ENCODE measurements at regions of chr3 and their contacts with region 1.

Region 1: DNA sequence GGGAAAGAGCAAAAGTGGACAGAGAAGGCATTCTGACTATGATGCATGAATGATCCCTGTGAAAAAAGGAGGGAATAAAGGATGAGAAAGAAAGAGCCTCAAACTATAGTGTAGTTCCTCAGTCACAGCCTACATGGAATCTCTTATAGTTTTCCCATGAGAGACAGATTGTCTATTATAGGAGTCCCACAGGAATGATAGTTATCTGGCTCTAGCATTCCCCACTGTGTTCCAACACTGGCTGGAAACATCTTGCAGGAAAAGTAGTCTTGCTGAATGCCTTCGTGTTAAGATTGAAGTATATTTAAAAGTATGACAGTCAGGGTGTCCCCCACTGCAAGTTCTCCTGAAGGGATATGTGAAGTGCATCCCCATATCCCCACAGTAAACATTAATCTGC is 641.5 kb upstream of the NECTIN3 start:
- DNase-seq: no peak
- ATAC-seq: no peak
- H3K4me3 ChIP-seq: no peak overlapping the region
- H3K4me3 Mint-ChIP-seq: no peak overlapping the region
- H3K27ac ChIP-seq: no peak overlapping the region
- H3K27ac Mint-ChIP-seq: no peak overlapping the region
- H3K4me1 ChIP-seq: no peaks in the 10 kb centered on the region
- H3K4me1 Mint-ChIP-seq: no peaks in the 10 kb centered on the region
- H3K27me3 ChIP-seq: no peaks in the 10 kb centered on the region
- H3K27me3 Mint-ChIP-seq: no peaks in the 10 kb centered on the region
- CTCF ChIP-seq: no peak

Region 2: DNA sequence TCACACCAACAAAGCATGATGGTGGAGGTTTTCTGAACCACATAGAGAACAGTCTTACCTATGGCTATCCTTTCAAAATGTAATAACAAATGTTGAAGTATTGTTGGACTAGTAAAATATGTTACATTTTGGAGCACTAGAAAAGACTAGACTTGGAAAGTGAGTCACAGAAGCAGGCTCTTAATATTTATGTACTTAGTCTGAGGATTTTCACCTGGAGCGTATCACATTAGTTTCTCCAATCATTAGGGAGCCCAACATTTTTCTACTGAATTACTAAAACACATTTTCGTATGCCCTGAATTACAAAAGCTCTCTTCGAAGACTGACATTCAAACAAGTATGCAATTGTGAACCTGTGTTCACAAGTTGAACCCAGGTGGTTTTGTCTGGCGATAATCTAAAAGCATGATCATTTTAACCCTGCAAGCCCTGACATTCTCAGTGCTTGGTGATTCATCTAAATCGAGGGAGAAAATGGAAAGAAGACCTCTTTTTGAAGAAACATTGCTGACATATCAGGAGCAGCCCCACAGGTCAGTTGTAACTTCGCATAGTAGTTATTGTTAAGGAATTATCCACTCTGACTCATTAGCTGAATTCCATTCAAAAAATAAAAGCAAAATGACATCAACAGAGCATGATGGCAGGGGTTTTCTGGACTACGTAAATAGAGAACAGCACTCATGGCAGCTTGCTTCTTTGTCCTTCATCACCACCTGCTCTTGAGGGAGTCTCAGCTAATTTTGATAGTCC is 38.3 kb before region 1 on chr3:
- CTCF ChIA-PET with region 1: no interaction called
- POLR2A ChIA-PET with region 1: no interaction called
- intact Hi-C with region 1: no loop called
- DNase-seq: no peak
- ATAC-seq: no peak
- H3K4me3 ChIP-seq: no peak overlapping the region
- H3K4me3 Mint-ChIP-seq: no peak overlapping the region
- H3K27ac ChIP-seq: no peak overlapping the region
- H3K27ac Mint-ChIP-seq: no peak overlapping the region
- H3K4me1 ChIP-seq: no peaks in the 10 kb centered on the region
- H3K4me1 Mint-ChIP-seq: no peaks in the 10 kb centered on the region
- H3K27me3 ChIP-seq: peaks cover 0 to 4% of the 10 kb centered on the region in 2 experiments
- H3K27me3 Mint-ChIP-seq: no peaks in the 10 kb centered on the region
- CTCF ChIP-seq: no peak

Region 3: DNA sequence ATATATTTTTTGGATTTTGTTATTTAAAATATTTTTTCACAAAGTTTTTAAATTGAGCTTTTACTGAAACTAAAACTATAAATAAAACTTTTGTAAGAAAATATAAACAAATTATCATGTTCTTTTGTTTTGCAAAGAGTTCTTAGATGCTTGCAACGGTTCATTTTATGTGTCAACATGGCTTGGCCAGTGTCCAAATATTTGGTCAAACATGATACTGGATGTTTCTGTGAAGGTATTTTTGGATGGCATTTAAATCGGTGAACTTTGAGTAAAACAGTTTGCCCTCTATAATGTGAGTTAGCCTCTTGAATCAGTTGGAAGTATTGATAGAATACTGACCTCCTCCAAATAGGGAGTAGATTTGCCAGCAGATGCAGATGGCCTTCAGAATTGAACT is 28.9 kb after region 1 on chr3:
- CTCF ChIA-PET with region 1: no interaction called
- POLR2A ChIA-PET with region 1: no interaction called
- intact Hi-C with region 1: loop called in 1 of 2 experiments (anchors 1 kb)
- DNase-seq: no peak
- ATAC-seq: no peak
- H3K4me3 ChIP-seq: no peak overlapping the region
- H3K4me3 Mint-ChIP-seq: no peak overlapping the region
- H3K27ac ChIP-seq: no peak overlapping the region
- H3K27ac Mint-ChIP-seq: no peak overlapping the region
- H3K4me1 ChIP-seq: no peaks in the 10 kb centered on the region
- H3K4me1 Mint-ChIP-seq: no peaks in the 10 kb centered on the region
- H3K27me3 ChIP-seq: no peaks in the 10 kb centered on the region
- H3K27me3 Mint-ChIP-seq: peaks cover 2% of the 10 kb centered on the region
- CTCF ChIP-seq: no peak